HEK293 (cell line): ENCODE measurements at regions of chr22 and their contacts with region 1.

Region 1: GRCh38 chr22:40645579-40646197 is 9.2 kb upstream of the MRTFA start:
- H3K4me3 ChIP-seq: no peak overlapping the region
- H3K27ac ChIP-seq: no peak overlapping the region
- H3K4me1 ChIP-seq: peaks cover 3% of the 10 kb centered on the region; the same call in 1 of the 2 replicates
- CTCF ChIP-seq: no peak

Region 2: GRCh38 chr22:40525249-40525884 is 120.3 kb before region 1 on chr22:
- CTCF ChIA-PET with region 1: interaction called, 90 read pairs
- POLR2A ChIA-PET with region 1: interaction called, 6 read pairs
- H3K4me3 ChIP-seq: no peak overlapping the region
- H3K27ac ChIP-seq: no peak overlapping the region
- H3K4me1 ChIP-seq: peaks cover 7% of the 10 kb centered on the region; the same call in 1 of the 2 replicates
- CTCF ChIP-seq: no peak

Region 3: GRCh38 chr22:40533712-40534378 is 111.8 kb before region 1 on chr22:
- CTCF ChIA-PET with region 1: interaction called, 16 read pairs
- POLR2A ChIA-PET with region 1: interaction called, 3 read pairs
- H3K4me3 ChIP-seq: peak overlapping the region; percentile 27
- H3K27ac ChIP-seq: peak overlapping the region; percentile 81
- H3K4me1 ChIP-seq: peaks cover 37% of the 10 kb centered on the region
- CTCF ChIP-seq: no peak

Region 4: DNA sequence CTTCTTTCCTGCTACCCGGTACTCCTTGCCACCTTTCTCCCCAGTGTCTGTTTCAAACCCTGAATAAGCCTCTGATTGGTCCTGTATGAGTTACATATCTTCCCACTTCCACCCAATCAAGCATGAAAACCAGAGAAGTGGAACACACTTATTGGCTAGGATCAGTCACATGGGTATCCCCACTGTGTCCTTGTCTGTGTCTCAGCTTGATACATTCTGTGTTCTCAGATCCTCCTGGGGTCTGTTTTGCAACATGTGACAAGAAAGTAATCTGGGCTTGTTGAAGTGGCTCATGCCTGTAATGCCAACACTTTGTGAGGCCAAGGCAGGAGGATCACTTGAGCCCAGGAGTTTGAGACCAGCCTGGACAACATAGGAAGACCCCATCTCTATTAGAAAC is 57.5 kb after region 1 on chr22:
- CTCF ChIA-PET with region 1: no interaction called
- POLR2A ChIA-PET with region 1: no interaction called
- H3K4me3 ChIP-seq: no peak overlapping the region
- H3K27ac ChIP-seq: no peak overlapping the region; the same call in 1 of the 2 replicates
- H3K4me1 ChIP-seq: no peaks in the 10 kb centered on the region
- CTCF ChIP-seq: no peak

Region 5: GRCh38 chr22:40898850-40899357 is 253.2 kb after region 1 on chr22:
- CTCF ChIA-PET with region 1: interaction called, 13 read pairs
- POLR2A ChIA-PET with region 1: interaction called, 8 read pairs
- H3K4me3 ChIP-seq: no peak overlapping the region
- H3K27ac ChIP-seq: no peak overlapping the region
- H3K4me1 ChIP-seq: no peaks in the 10 kb centered on the region
- CTCF ChIP-seq: 0 out of 2 replicates have a peak, but pooled peaks have one; percentile 37